ENCODE measurements at regions of chr11 and their contacts with region 1.

Region 1: GRCh38 chr11:8813658-8814057 is 97.3 kb upstream of the AKIP1 start:
- DNase-seq: no peak
- H3K4me3 ChIP-seq: no peak overlapping the region
- CTCF ChIP-seq: peak; percentile 89

Region 2: GRCh38 chr11:8545698-8546366 is 267.8 kb before region 1 on chr11:
- CTCF ChIA-PET with region 1: no interaction called
- POLR2A ChIA-PET with region 1: no interaction called
- DNase-seq: no peak
- H3K4me3 ChIP-seq: no peak overlapping the region
- CTCF ChIP-seq: no peak

Region 3: GRCh38 chr11:8688414-8689362 is 125.0 kb before region 1 on chr11:
- CTCF ChIA-PET with region 1: interaction called, 8 read pairs
- POLR2A ChIA-PET with region 1: interaction called, 35 read pairs
- DNase-seq: peak; percentile 59
- H3K4me3 ChIP-seq: peak overlapping the region; percentile 71
- CTCF ChIP-seq: no peak

Region 4: GRCh38 chr11:8717876-8718753 is 95.5 kb before region 1 on chr11:
- CTCF ChIA-PET with region 1: interaction called, 4 read pairs
- POLR2A ChIA-PET with region 1: interaction called, 16 read pairs
- DNase-seq: peak; percentile 90
- H3K4me3 ChIP-seq: peak overlapping the region; percentile 53
- CTCF ChIP-seq: no peak

Region 5: DNA sequence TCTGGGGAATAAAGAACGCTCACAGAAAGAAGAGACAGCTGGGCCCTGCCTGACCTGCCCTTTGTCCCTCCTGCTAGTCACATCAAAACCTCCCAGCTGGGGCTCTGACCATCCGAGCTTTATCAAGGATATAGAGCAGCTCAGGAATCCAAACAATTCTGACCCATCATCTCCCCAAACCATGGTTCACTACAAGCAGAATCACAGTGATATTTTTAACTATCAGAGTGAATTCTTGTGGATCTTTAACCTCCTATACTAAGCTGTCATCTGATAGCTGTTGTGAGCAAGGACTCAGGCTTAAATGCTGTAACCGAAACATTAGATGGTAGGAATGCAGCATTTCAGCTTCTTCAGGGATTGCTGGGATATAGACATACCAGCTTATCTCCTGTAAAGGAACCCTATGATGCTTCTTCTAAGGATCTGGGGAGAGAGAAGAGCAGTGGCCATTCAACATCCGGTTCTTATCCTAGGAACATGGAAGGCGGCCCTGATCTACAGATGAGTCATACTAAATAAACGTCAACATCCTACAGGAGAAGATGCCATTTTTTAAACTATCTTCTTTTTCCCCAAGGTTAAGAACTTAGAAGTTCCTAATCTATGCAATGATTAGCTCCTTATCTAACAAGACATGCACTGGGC is 12.6 kb after region 1 on chr11:
- CTCF ChIA-PET with region 1: interaction called, 34 read pairs
- POLR2A ChIA-PET with region 1: interaction called, 8 read pairs
- DNase-seq: no peak
- H3K4me3 ChIP-seq: no peak overlapping the region
- CTCF ChIP-seq: no peak

Region 6: GRCh38 chr11:8832571-8833260 is 19.1 kb after region 1 on chr11:
- CTCF ChIA-PET with region 1: interaction called, 23 read pairs
- POLR2A ChIA-PET with region 1: interaction called, 15 read pairs
- DNase-seq: no peak
- H3K4me3 ChIP-seq: peak overlapping the region; percentile 12; the same call in 1 of the 2 replicates
- CTCF ChIP-seq: no peak

Region 7: GRCh38 chr11:8911029-8911826 is 97.6 kb after region 1 on chr11 and contains the start of gene AKIP1:
- CTCF ChIA-PET with region 1: interaction called, 12 read pairs
- POLR2A ChIA-PET with region 1: no interaction called
- DNase-seq: no peak
- H3K4me3 ChIP-seq: peak within 1 kb of the TSS; percentile 85
- CTCF ChIP-seq: no peak

Region 8: GRCh38 chr11:9120664-9121485 is 307.2 kb after region 1 on chr11:
- CTCF ChIA-PET with region 1: no interaction called
- POLR2A ChIA-PET with region 1: no interaction called
- DNase-seq: no peak
- H3K4me3 ChIP-seq: no peak overlapping the region
- CTCF ChIP-seq: peak; percentile 14